ENCODE measurements at regions of chr6 and their contacts with region 1.

Region 1: GRCh38 chr6:123323452-123324329 is 313.1 kb downstream of the TRDN start:
- DNase-seq: peak in 1 of 2 donors; percentile 17
- H3K4me3 ChIP-seq: no peak overlapping the region
- H3K27ac ChIP-seq: no peak overlapping the region
- H3K4me1 ChIP-seq: no peaks in the 10 kb centered on the region
- H3K27me3 ChIP-seq: no peaks in the 10 kb centered on the region
- CTCF ChIP-seq: no peak
- EP300 ChIP-seq: no peak
- POLR2A ChIP-seq: no peak

Region 2: GRCh38 chr6:122878796-122879195 is 444.9 kb before region 1 on chr6:
- intact Hi-C with region 1: loop called (anchors 5 kb)
- DNase-seq: peak in 1 of 2 donors; percentile 9
- H3K4me3 ChIP-seq: no peak overlapping the region
- H3K27ac ChIP-seq: no peak overlapping the region
- H3K4me1 ChIP-seq: no peaks in the 10 kb centered on the region
- H3K27me3 ChIP-seq: no peaks in the 10 kb centered on the region
- CTCF ChIP-seq: no peak
- EP300 ChIP-seq: no peak
- POLR2A ChIP-seq: no peak

Region 3: GRCh38 chr6:123503619-123504018 is 179.9 kb after region 1 on chr6:
- intact Hi-C with region 1: no loop called
- DNase-seq: no peak
- H3K4me3 ChIP-seq: no peak overlapping the region
- H3K27ac ChIP-seq: no peak overlapping the region
- H3K4me1 ChIP-seq: no peaks in the 10 kb centered on the region
- H3K27me3 ChIP-seq: no peaks in the 10 kb centered on the region
- CTCF ChIP-seq: no peak
- EP300 ChIP-seq: no peak
- POLR2A ChIP-seq: no peak

Region 4: DNA sequence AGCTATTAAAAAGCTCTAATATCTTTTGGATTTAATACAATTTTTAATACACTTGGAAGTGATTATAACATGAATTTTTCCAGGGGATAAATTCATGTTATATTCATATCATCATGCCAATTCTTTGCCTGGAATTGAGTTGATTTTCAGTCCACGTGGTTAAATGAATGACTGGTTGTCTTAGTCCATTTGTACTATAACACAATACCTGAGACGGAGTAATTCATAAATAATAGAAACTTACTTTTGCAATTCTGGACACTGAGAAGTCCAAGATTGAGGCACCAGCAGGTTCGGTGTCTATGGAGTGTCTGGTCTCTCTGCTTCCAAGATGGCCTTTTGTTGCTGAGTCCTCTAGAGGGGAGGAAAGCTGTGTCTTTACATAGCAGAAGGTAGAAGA is 379.3 kb after region 1 on chr6:
- intact Hi-C with region 1: no loop called
- DNase-seq: no peak
- H3K4me3 ChIP-seq: no peak overlapping the region
- H3K27ac ChIP-seq: no peak overlapping the region
- H3K4me1 ChIP-seq: no peaks in the 10 kb centered on the region
- H3K27me3 ChIP-seq: no peaks in the 10 kb centered on the region
- CTCF ChIP-seq: no peak
- EP300 ChIP-seq: no peak
- POLR2A ChIP-seq: no peak